Activated naive CD4-positive, alpha-beta T cell treated with anti-CD3 and anti-CD28 coated beads for 36 hours (primary cell): ENCODE measurements at regions of chr1 and their contacts with region 1.

Region 1: GRCh38 chr1:110645821-110646735 is 28.7 kb downstream of the KCNA3 start:
- DNase-seq: no peak
- H3K4me3 Mint-ChIP-seq: peak overlapping the region; percentile 28
- H3K27ac Mint-ChIP-seq: no peak overlapping the region
- H3K4me1 Mint-ChIP-seq: peaks cover 55% of the 10 kb centered on the region
- H3K27me3 Mint-ChIP-seq: no peaks in the 10 kb centered on the region

Region 2: GRCh38 chr1:110235834-110236682 is 410.0 kb before region 1 on chr1:
- CTCF ChIA-PET with region 1: no interaction called
- intact Hi-C with region 1: loop called (anchors 1 kb)
- DNase-seq: peak; percentile 84
- H3K4me3 Mint-ChIP-seq: no peak overlapping the region
- H3K27ac Mint-ChIP-seq: peak overlapping the region; percentile 89
- H3K4me1 Mint-ChIP-seq: peaks cover 55% of the 10 kb centered on the region
- H3K27me3 Mint-ChIP-seq: no peaks in the 10 kb centered on the region

Region 3: DNA sequence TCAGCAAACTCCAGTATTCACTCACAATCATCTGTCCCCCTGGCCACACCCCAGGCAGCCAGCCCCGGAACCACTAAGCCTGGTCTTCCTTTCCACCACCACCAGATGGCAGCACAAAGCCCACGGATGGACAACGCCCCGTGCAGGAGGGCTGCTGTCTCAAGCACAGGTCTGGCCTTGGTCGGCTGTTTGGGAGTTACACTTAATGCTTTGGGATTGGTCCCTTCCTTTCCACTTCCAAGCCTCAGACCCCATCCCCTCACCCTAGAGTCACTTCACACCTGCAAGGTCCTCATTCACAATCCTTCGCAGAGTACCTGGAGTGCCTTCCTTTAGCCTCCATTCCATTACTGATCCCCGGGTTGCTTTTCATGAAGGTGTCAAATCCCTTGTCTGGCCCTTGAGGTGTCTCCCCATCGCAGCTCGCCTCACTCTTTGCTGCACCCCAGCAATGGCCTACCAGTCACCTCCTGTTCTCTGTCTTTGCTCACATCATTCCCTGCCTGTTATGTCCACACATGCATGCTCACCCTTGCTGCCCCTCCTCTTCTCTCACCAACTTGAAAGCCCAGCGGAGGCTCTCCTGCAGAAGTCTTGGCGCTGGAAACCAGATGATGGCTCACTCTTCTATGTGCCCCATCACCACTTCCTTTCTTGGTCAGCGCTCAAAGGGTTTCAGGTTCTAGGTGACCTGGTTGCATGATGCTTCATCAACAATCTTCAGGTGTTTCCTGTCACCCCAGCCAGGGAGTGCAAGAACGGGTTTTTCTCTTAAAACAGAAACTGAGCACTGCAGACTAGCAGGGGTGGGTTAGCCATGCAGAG is 15.0 kb before region 1 on chr1:
- CTCF ChIA-PET with region 1: interaction called, 135 read pairs
- intact Hi-C with region 1: loop called (anchors 1 kb)
- DNase-seq: peak; percentile 92
- H3K4me3 Mint-ChIP-seq: no peak overlapping the region
- H3K27ac Mint-ChIP-seq: no peak overlapping the region
- H3K4me1 Mint-ChIP-seq: peaks cover 54% of the 10 kb centered on the region
- H3K27me3 Mint-ChIP-seq: no peaks in the 10 kb centered on the region

Region 4: GRCh38 chr1:110657351-110657750 is 11.3 kb after region 1 on chr1:
- CTCF ChIA-PET with region 1: interaction called, 10 read pairs
- intact Hi-C with region 1: loop called (anchors 1 kb)
- DNase-seq: no peak
- H3K4me3 Mint-ChIP-seq: no peak overlapping the region
- H3K27ac Mint-ChIP-seq: peak overlapping the region; percentile 71
- H3K4me1 Mint-ChIP-seq: peaks cover 41% of the 10 kb centered on the region
- H3K27me3 Mint-ChIP-seq: no peaks in the 10 kb centered on the region

Region 5: GRCh38 chr1:111275079-111275478 is 629.0 kb after region 1 on chr1:
- CTCF ChIA-PET with region 1: no interaction called
- intact Hi-C with region 1: loop called (anchors 5 kb)
- DNase-seq: peak; percentile 46
- H3K4me3 Mint-ChIP-seq: no peak overlapping the region
- H3K27ac Mint-ChIP-seq: peak overlapping the region; percentile 32
- H3K4me1 Mint-ChIP-seq: peaks cover 47% of the 10 kb centered on the region
- H3K27me3 Mint-ChIP-seq: peaks cover 22% of the 10 kb centered on the region